Spleen (tissue), 13 donors: ENCODE measurements at regions of chr14 and their contacts with region 1.

Region 1: GRCh38 chr14:44897045-44897844 is 64.5 kb downstream of the KLHL28 start:
- DNase-seq: peak; percentile 98
- H3K4me3 ChIP-seq: peak overlapping the region; percentile 55 to 91 (median 75)
- H3K27ac ChIP-seq: peak overlapping the region; percentile 92 to 99 (median 98)
- H3K4me1 ChIP-seq: peaks cover 0 to 27% (median 20%) of the 10 kb centered on the region in 6 donors
- H3K27me3 ChIP-seq: no peaks in the 10 kb centered on the region
- CTCF ChIP-seq: no peak
- POLR2A ChIP-seq: peak in 2 of 3 donors; percentile 19 to 66

Region 2: GRCh38 chr14:44961604-44962333 is 64.5 kb after region 1 on chr14 and contains the starts of genes KLHL28 and TOGARAM1:
- intact Hi-C with region 1: loop called (anchors 5 kb)
- DNase-seq: peak; percentile 98
- H3K4me3 ChIP-seq: peak within 1 kb of the TSS; percentile 70 to 97 (median 90)
- H3K27ac ChIP-seq: peak within 1 kb of the TSS; percentile 80 to 96 (median 93)
- H3K4me1 ChIP-seq: peaks cover 30 to 90% (median 78%) of the 10 kb centered on the region in 6 donors
- H3K27me3 ChIP-seq: no peaks in the 10 kb centered on the region
- CTCF ChIP-seq: peak in 2 of 11 experiments; percentile 16 to 21
- POLR2A ChIP-seq: peak in 2 of 3 donors; percentile 50 to 89
- total RNA-seq, gene KLHL28: 10.9 to 21.5 (median 18.3) TPM
- total RNA-seq, gene TOGARAM1: 11.1 to 37.3 (median 20.1) TPM

Region 3: DNA sequence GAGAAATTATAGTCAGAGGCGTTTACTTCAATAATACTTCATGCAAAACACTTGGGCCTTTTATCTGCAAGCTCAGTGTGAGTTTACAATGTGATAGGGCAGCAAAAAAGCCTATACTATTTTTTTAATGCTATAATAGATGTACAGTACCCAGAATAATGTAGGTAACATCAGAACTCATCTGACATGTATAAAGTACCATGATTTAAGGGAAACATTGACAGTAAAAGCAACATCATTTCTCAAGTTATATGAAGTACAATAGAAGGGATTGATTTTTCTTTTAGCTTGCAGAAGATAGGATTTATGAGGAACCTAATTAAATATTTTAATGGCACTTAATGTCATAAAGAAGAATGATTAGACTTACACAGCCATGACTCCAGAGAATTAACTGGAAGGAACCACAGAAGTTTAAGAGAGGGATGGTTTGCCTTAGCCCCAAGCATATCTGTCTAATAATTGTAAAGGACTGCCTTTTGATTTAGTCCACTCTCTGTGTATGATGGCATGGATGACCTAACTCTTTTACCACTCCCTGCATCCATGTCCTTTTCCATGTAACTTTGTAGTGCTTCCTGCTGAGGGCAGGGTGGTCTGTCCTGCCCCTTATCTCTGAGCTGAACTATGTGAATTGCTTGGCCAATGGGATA is 411.6 kb after region 1 on chr14:
- intact Hi-C with region 1: no loop called
- DNase-seq: no peak
- H3K4me3 ChIP-seq: no peak overlapping the region
- H3K27ac ChIP-seq: no peak overlapping the region
- H3K4me1 ChIP-seq: no peaks in the 10 kb centered on the region
- H3K27me3 ChIP-seq: no peaks in the 10 kb centered on the region
- CTCF ChIP-seq: no peak
- POLR2A ChIP-seq: no peak